ENCODE measurements at regions of chr11 and their contacts with region 1.

Region 1: GRCh38 chr11:44621140-44621681 is 55.7 kb downstream of the CD82 start:
- DNase-seq: peak in 33 of 35 experiments; percentile 15 to 73 (median 49)
- ATAC-seq: peak; percentile 57 to 72 (median 60)
- H3K4me3 ChIP-seq: no peak overlapping the region
- H3K4me3 Mint-ChIP-seq: no peak overlapping the region
- H3K27ac ChIP-seq: no peak overlapping the region
- H3K27ac Mint-ChIP-seq: no peak overlapping the region
- H3K4me1 ChIP-seq: peaks cover 5 to 32% of the 10 kb centered on the region in 2 experiments
- H3K4me1 Mint-ChIP-seq: peaks cover 21 to 37% (median 35%) of the 10 kb centered on the region in 3 donors
- H3K27me3 ChIP-seq: no peaks in the 10 kb centered on the region
- H3K27me3 Mint-ChIP-seq: no peaks in the 10 kb centered on the region

Region 2: GRCh38 chr11:44556735-44557409 is 64.3 kb before region 1 on chr11:
- CTCF ChIA-PET with region 1: interaction called, 24 to 28 read pairs
- POLR2A ChIA-PET with region 1: no interaction called
- DNase-seq: peak in 34 of 35 experiments; percentile 24 to 83 (median 61)
- ATAC-seq: peak; percentile 71 to 85 (median 76)
- H3K4me3 ChIP-seq: no peak overlapping the region
- H3K4me3 Mint-ChIP-seq: no peak overlapping the region
- H3K27ac ChIP-seq: no peak overlapping the region
- H3K27ac Mint-ChIP-seq: peak overlapping the region; percentile 66 to 83
- H3K4me1 ChIP-seq: peaks cover 8 to 19% of the 10 kb centered on the region in 2 experiments
- H3K4me1 Mint-ChIP-seq: peaks cover 13 to 35% (median 19%) of the 10 kb centered on the region in 3 donors
- H3K27me3 ChIP-seq: no peaks in the 10 kb centered on the region
- H3K27me3 Mint-ChIP-seq: no peaks in the 10 kb centered on the region

Region 3: GRCh38 chr11:44589301-44589700 is 31.9 kb before region 1 on chr11:
- CTCF ChIA-PET with region 1: interaction called, 3 to 11 read pairs
- POLR2A ChIA-PET with region 1: no interaction called
- DNase-seq: no peak
- ATAC-seq: no peak
- H3K4me3 ChIP-seq: no peak overlapping the region
- H3K4me3 Mint-ChIP-seq: no peak overlapping the region
- H3K27ac ChIP-seq: no peak overlapping the region
- H3K27ac Mint-ChIP-seq: peak overlapping the region in 1 of 2 donors; percentile 16
- H3K4me1 ChIP-seq: peaks cover 0 to 32% of the 10 kb centered on the region in 2 experiments
- H3K4me1 Mint-ChIP-seq: peaks cover 16 to 55% (median 31%) of the 10 kb centered on the region in 3 donors
- H3K27me3 ChIP-seq: no peaks in the 10 kb centered on the region
- H3K27me3 Mint-ChIP-seq: no peaks in the 10 kb centered on the region

Region 4: DNA sequence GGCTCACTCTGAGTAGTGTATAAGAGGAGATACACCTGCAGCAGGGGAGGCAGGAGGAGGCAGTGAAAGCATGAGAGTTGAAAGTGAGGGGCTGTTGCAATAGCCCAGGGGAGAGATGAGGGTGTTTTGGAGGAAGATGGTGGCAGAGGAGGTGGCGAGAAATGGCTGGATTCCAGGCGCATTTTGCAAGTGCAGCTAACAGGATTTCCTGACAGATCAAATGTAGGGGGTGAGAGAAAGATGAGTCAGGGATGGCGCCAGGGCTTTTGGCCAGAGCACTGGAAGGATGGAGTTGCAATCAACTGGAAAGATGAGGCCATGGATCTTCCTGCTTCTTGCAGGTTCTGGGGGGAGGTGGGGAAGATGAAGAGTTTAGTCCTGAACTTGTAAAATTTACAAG is 88.8 kb after region 1 on chr11:
- CTCF ChIA-PET with region 1: no interaction called
- POLR2A ChIA-PET with region 1: interaction called in 1 of 2 experiments, 10 read pairs
- DNase-seq: no peak
- ATAC-seq: no peak
- H3K4me3 ChIP-seq: no peak overlapping the region
- H3K4me3 Mint-ChIP-seq: no peak overlapping the region
- H3K27ac ChIP-seq: no peak overlapping the region
- H3K27ac Mint-ChIP-seq: no peak overlapping the region
- H3K4me1 ChIP-seq: peaks cover 0 to 12% of the 10 kb centered on the region in 2 experiments
- H3K4me1 Mint-ChIP-seq: peaks cover 30 to 39% (median 31%) of the 10 kb centered on the region in 3 donors
- H3K27me3 ChIP-seq: peaks cover 0 to 4% of the 10 kb centered on the region in 2 experiments
- H3K27me3 Mint-ChIP-seq: peaks cover 0 to 4% of the 10 kb centered on the region in 2 donors